Mammary epithelial cell (primary cell): ENCODE measurements at regions of chr10 and their contacts with region 1.

Region 1: GRCh38 chr10:91908337-91909116 is 759 bp downstream of the FGFBP3 start:
- DNase-seq: peak; percentile 71
- H3K4me3 ChIP-seq: peak overlapping the region; percentile 65 to 68 (median 67)
- H3K27ac ChIP-seq: no peak overlapping the region
- H3K4me1 ChIP-seq: peaks cover 15% of the 10 kb centered on the region
- H3K27me3 ChIP-seq: no peaks in the 10 kb centered on the region
- CTCF ChIP-seq: peak; percentile 13 to 38

Region 2: DNA sequence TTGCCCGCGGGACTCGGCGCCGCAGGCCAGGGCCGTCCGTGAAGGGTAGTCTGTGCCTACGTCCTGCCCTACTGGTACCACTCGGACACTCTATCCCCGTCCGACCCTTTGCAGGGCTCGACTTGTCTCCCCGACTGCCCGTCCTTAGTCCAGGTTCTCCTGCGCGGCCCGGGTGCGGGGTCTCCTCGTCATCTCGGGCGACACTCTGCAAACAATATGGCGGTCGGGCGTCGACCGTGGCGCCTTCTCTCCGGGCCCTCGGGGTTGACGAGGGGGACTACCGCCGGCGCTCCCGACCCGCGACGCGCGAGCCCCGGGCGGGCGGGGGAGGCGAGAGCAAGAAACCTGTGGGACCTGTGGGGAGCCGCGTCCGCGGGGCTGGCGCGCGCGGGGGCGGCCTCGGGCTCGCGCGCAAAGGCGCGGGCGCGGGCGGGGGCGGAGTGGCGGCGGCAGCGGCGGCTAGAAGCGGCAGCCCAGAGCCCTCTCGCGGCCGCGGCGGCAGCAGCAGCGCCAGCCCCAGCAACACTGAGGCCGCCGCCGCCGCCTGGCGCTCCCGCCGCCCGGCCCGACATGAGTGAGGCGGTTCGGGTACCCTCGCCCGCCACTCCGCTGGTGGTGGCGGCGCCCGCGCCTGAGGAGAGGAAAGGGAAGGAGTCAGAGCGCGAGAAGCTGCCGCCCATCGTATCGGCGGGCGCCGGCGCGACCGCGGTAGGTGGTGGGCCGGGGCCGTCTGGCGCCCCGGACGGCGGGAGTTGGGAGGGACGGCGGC is 498.5 kb before region 1 on chr10 and contains the start of gene HECTD2:
- CTCF ChIA-PET with region 1: no interaction called
- dilution Hi-C with region 1: no loop called
- in situ Hi-C with region 1: no loop called
- intact Hi-C with region 1: loop called (anchors 10 kb)
- DNase-seq: peak; percentile 74
- H3K4me3 ChIP-seq: peak within 1 kb of the TSS; percentile 53 to 81 (median 76)
- H3K27ac ChIP-seq: peak within 1 kb of the TSS; percentile 84
- H3K4me1 ChIP-seq: peaks cover 21% of the 10 kb centered on the region
- H3K27me3 ChIP-seq: no peaks in the 10 kb centered on the region
- CTCF ChIP-seq: peak in 1 of 2 donors; percentile 21
- total RNA-seq, gene HECTD2: 10.0 TPM

Region 3: DNA sequence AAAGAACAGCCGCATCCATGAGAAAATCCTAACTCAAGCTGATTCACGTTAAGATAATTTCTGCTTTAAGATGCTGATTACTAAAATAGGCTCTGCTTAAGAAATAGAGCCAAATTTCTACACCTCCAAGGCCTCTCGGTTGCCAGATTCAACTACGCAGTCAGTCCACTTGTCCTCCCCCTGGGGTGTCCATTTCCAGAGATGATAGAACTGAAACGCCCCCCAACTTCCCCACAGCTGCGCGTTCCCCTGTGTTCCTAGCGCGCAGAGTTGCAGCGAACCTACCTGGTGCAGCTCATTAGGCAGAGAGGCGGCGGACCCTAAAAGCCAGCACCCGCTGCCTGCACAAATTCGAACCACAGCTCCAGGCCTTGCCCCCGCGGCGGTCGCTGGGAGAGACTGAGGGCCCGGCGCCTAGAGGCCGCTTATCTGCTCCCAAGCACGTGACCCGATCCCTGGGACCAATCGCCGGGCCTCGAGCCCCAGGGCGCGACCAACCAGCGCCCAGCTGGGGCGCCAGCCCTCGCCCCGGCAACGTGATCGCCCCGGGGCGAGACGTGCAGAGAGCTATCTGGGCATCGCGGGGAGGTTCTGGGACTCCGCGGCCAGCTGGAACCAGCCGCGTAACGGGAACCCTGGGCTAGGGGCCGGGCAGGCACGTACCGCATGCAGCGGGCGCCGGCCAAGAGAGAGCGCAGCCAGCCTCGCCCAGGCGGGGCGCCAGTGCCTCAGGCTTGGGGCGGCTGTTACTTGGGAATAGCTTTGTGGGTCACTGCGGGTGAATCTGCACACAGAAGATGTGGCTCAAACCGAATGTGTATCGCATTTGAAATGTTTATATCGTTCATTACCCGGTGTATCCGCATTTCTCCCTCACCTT is 275.6 kb before region 1 on chr10 and contains the start of gene PPP1R3C:
- CTCF ChIA-PET with region 1: no interaction called
- dilution Hi-C with region 1: no loop called
- in situ Hi-C with region 1: no loop called
- intact Hi-C with region 1: loop called (anchors 2 kb)
- DNase-seq: peak; percentile 84
- H3K4me3 ChIP-seq: peak within 1 kb of the TSS; percentile 53 to 71 (median 55)
- H3K27ac ChIP-seq: peak within 1 kb of the TSS; percentile 15
- H3K4me1 ChIP-seq: peaks cover 19% of the 10 kb centered on the region
- H3K27me3 ChIP-seq: no peaks in the 10 kb centered on the region
- CTCF ChIP-seq: peak in 1 of 2 donors; percentile 36
- total RNA-seq, gene PPP1R3C: 0.49 to 11.3 TPM

Region 4: DNA sequence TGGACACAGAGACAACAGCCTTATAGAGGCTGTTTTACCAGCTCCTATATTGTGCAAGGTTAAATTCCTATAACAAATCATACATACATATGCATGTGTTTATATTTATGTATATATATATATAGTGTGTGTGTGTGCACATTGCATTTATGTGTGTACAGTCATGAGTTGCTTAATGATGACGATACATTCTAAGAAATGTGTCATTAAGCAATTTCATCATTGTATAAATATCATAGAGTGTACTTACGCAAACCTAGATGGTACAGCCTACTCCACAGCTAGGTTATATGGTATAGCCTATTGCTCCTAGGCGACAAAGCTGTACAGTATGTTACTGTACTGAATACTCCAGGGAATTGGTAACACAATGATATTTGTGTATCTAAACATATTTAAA is 140.4 kb before region 1 on chr10:
- CTCF ChIA-PET with region 1: no interaction called
- dilution Hi-C with region 1: no loop called
- in situ Hi-C with region 1: loop called in 1 of 2 experiments (anchors 10 kb)
- intact Hi-C with region 1: no loop called
- DNase-seq: no peak
- H3K4me3 ChIP-seq: no peak overlapping the region
- H3K27ac ChIP-seq: no peak overlapping the region
- H3K4me1 ChIP-seq: no peaks in the 10 kb centered on the region
- H3K27me3 ChIP-seq: no peaks in the 10 kb centered on the region
- CTCF ChIP-seq: no peak

Region 5: DNA sequence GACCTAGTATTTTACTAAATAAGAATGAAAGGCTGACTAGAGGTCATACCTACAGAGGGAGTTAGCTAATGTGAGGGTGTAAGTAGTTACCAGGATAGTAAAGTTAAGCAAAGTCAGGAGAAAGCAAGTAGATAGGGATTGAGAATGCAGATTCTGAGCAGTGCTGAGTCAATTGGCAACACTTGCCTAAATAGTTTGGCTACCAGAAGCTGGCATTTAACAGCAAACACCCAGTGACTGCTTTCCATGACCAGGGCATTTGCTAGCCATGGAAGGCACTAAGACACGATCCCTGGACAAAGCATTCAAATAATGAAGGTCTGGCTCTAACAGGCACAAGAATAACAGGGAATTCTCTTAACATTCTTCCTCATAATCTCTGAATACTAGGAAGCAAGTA is 84.5 kb before region 1 on chr10:
- CTCF ChIA-PET with region 1: no interaction called
- dilution Hi-C with region 1: no loop called
- in situ Hi-C with region 1: no loop called
- intact Hi-C with region 1: no loop called
- DNase-seq: no peak
- H3K4me3 ChIP-seq: no peak overlapping the region
- H3K27ac ChIP-seq: no peak overlapping the region
- H3K4me1 ChIP-seq: no peaks in the 10 kb centered on the region
- H3K27me3 ChIP-seq: no peaks in the 10 kb centered on the region
- CTCF ChIP-seq: no peak

Region 6: DNA sequence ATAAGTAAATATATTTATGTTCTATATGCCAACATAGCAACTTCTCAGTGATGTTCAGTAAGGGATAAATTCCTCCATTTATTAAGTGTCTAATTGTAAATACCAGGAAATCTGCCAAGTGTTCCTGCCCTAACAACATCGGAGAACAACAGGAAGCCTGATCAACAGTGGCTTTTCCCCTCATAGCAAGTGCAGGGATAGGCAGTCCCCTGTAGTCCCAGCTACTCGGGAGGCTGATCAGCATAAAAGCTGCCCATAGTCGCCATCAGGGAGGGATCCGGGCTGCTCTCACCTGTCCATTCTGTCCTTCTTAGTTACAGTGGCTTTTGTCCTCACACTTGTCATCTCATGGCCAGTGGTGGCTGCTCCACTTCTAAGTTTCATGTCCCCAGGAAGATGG is 524.1 kb after region 1 on chr10:
- CTCF ChIA-PET with region 1: no interaction called
- dilution Hi-C with region 1: no loop called
- in situ Hi-C with region 1: no loop called
- intact Hi-C with region 1: loop called (anchors 5 kb)
- DNase-seq: no peak
- H3K4me3 ChIP-seq: no peak overlapping the region
- H3K27ac ChIP-seq: no peak overlapping the region
- H3K4me1 ChIP-seq: no peaks in the 10 kb centered on the region
- H3K27me3 ChIP-seq: no peaks in the 10 kb centered on the region
- CTCF ChIP-seq: no peak